ENCODE measurements at regions of chr19 and their contacts with region 1.

Region 1: GRCh38 chr19:36850559-36851442 is at the start of gene ZNF345:
- DNase-seq: peak; percentile 84 to 90
- H3K4me3 ChIP-seq: peak within 1 kb of the TSS; percentile 98
- H3K27ac ChIP-seq: 0 out of 2 replicates have a peak within 1 kb of the TSS, but pooled peaks have one; percentile 1
- H3K4me1 ChIP-seq: peaks cover 11% of the 10 kb centered on the region; the same call in 1 of the 2 replicates
- H3K27me3 ChIP-seq: no peaks in the 10 kb centered on the region
- CTCF ChIP-seq: no peak
- total RNA-seq, gene ZNF345: 7.1 and 8.2 TPM in 2 replicates

Region 2: DNA sequence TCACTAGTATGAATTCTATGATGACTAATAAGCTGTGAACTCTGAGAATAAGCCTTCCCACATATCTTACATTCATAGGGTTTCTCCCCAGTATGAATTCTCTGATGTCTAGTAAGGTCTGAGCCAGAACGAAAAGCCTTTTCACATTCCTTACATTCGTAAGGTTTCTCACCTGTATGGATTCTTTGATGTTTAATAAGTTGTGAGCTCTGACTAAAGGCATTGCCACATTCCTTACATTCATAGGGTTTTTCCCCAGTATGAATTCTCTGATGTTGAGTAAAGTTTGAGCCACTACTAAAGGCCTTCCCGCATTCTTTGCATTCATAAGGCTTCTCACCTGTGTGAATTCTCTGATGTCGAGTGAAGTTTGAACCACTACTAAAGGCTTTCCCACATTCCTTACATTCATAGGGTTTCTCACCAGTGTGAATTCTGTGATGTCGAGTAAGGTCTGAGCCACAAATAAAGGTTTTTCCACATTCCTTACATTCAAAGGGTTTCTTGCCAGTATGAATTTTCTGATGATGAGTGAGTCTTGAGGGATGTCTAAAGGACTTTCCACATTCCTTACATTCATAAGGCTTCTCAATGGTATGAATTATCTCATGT is 401.6 kb before region 1 on chr19:
- CTCF ChIA-PET with region 1: no interaction called
- POLR2A ChIA-PET with region 1: interaction called, 10 read pairs
- intact Hi-C with region 1: no loop called
- DNase-seq: no peak
- H3K4me3 ChIP-seq: no peak overlapping the region
- H3K27ac ChIP-seq: no peak overlapping the region
- H3K4me1 ChIP-seq: no peaks in the 10 kb centered on the region
- H3K27me3 ChIP-seq: no peaks in the 10 kb centered on the region
- CTCF ChIP-seq: no peak

Region 3: DNA sequence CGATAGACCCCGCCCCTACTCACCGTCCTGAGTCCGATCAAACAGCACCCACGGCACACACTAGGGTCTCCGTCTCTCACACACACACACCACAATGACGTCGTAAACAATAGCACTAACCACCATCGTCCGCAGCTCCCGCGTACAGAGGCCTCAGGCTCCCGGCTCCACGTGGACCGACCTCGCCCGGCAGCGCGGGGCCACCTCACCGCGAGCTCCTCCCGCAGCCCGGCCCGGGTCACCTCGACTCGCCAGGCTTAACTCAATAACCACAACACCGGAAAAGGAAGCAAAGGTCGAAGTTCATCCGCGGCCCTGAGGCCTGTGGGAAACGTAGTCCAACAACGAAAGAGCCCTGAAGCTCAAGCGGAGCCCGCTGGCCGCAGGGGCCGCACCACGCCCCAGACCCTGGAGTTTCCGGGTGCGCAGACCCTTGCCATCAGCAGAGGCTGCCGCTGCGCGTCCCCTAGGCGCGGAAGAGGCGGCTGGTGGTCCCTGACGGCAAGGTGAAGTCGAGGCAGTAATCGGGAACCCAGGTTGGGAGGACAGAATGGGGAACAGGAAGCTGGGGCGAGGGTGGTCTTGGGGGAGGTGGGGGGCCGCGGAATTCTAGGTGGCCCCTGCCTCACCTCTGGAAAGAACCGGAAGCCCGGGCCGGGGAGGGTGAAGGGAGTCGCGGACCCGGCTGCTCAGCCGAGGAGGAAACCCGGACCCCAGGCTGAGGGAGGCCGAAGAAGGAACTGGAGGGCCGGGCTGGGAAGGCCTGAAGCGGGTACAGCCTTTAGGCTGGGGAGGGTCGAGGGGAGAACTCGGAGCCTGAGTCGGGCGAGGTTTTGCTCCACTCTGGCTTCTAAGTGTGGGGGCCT is 277.5 kb before region 1 on chr19 and contains the start of gene ZNF529:
- CTCF ChIA-PET with region 1: no interaction called
- POLR2A ChIA-PET with region 1: interaction called, 12 read pairs
- intact Hi-C with region 1: no loop called
- DNase-seq: peak; percentile 84 to 87
- H3K4me3 ChIP-seq: peak within 1 kb of the TSS; percentile 90
- H3K27ac ChIP-seq: peak within 1 kb of the TSS; percentile 55
- H3K4me1 ChIP-seq: peaks cover 6% of the 10 kb centered on the region; the same call in 1 of the 2 replicates
- H3K27me3 ChIP-seq: no peaks in the 10 kb centered on the region
- CTCF ChIP-seq: no peak
- total RNA-seq, gene ZNF529: 4.0 and 4.2 TPM in 2 replicates

Region 4: GRCh38 chr19:36772311-36773222 is 78.2 kb before region 1 on chr19 and contains the start of gene ZNF850:
- CTCF ChIA-PET with region 1: no interaction called
- POLR2A ChIA-PET with region 1: no interaction called
- intact Hi-C with region 1: loop called (anchors 2 kb)
- DNase-seq: peak; percentile 86 to 92
- H3K4me3 ChIP-seq: peak within 1 kb of the TSS; percentile 81
- H3K27ac ChIP-seq: no peak within 1 kb of the TSS
- H3K4me1 ChIP-seq: no peaks in the 10 kb centered on the region
- H3K27me3 ChIP-seq: no peaks in the 10 kb centered on the region
- CTCF ChIP-seq: no peak
- total RNA-seq, gene ZNF850: 4.0 and 6.0 TPM in 2 replicates

Region 5: DNA sequence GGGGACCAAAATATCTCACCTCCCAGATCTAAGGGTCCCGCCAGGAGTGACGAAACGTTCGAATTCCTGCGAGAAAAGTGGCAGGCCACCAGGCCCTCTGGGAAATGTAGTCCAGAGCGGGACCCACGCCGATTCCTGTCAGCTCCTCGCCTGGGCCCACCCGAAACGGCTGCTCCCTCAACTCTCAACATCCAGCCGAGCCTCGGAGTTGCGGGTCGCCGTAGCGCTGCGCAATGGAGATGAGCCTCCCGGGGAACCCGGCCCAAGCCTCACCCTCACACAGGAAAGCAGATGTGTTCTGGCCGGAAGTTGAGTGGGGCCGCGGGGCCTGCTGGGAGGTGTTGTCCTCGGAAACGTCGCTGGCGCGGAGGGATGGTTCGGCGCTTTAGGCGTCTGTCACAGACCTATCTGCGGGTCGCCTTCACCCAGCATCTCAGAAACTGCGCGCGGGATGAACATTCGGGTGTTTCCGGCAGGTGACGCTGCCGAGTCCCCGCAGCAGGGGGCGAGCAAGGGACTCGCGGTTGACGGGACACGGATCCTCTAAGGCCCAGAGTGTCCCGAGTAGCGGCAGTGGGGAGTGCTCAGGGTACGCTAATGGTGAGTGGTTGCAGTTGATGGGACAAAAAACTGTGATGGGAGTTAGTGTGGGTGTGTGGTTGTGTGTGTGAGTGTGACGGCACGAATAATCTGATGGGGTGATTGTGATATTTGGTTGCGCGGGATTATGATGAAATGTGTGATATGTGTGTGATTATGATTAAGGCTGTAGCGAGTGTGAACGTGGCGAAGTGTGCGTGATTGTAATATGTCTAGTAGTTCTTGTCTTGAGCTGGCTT is 65.4 kb after region 1 on chr19 and contains the starts of genes ZNF568 and ZNF829:
- CTCF ChIA-PET with region 1: no interaction called
- POLR2A ChIA-PET with region 1: no interaction called
- intact Hi-C with region 1: loop called (anchors 2 kb)
- DNase-seq: peak; percentile 77 to 86
- H3K4me3 ChIP-seq: peak within 1 kb of the TSS; percentile 80
- H3K27ac ChIP-seq: peak within 1 kb of the TSS; percentile 53
- H3K4me1 ChIP-seq: peaks cover 9% of the 10 kb centered on the region
- H3K27me3 ChIP-seq: no peaks in the 10 kb centered on the region
- CTCF ChIP-seq: peak; percentile 65
- total RNA-seq, gene ZNF568: 5.8 and 6.4 TPM in 2 replicates
- total RNA-seq, gene ZNF829: 2.6 and 3.1 TPM in 2 replicates

Region 6: GRCh38 chr19:37370880-37371661 is 520.3 kb after region 1 on chr19 and contains the start of gene ZNF527:
- CTCF ChIA-PET with region 1: interaction called, 16 read pairs
- POLR2A ChIA-PET with region 1: interaction called, 4 read pairs
- intact Hi-C with region 1: no loop called
- DNase-seq: peak; percentile 90 to 95
- H3K4me3 ChIP-seq: peak within 1 kb of the TSS; percentile 85
- H3K27ac ChIP-seq: no peak within 1 kb of the TSS
- H3K4me1 ChIP-seq: 0 out of 2 replicates have a peak, but pooled peaks cover 4% of the 10 kb centered on the region
- H3K27me3 ChIP-seq: no peaks in the 10 kb centered on the region
- CTCF ChIP-seq: no peak
- total RNA-seq, gene ZNF527: 2.9 and 3.2 TPM in 2 replicates